ENCODE measurements at regions of chr2 and their contacts with region 1.

Region 1: DNA sequence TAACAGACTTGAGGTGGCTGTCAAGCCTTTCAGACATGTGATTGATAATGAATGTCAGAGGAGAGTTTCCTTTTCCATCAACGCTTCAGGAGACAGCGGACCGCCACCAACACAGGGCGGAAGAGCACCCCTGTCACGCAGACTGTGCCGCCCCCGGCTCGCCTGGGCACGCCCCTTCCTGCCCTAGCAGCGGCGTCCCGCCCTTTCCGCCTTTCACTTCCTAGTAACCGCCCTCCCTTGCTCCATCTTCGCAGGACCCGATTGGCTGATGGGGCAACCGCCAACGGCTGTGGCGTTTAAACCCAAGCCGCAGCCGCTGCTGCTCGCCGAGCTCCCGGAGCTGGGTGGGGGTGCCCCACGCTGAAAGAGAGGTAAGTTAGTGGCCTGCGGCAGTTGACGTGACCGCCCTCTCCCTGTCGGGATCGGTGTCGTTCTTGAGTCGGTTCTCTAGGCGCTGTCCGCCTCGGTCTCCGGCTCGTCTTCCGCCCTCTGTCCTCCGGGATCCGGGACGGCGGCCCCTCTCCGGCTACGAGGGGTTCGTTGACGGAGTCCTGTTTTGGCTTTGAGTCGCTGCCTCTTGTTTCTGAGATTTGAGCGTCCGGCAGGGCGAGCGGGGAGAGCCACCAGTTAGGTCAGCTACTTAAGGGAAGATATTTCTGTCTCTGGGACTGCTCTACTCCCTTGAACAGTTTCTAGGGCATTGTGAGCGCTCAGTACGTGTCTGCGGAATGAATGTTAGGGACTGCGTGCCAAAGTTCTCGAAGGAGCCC is at the start of gene SGO2:
- DNase-seq: peak; percentile 98
- ATAC-seq: peak; percentile 90
- H3K4me3 ChIP-seq: peak within 1 kb of the TSS; percentile 92
- H3K27ac ChIP-seq: peak within 1 kb of the TSS; percentile 57
- H3K4me1 ChIP-seq: peaks cover 46% of the 10 kb centered on the region
- H3K27me3 ChIP-seq: no peaks in the 10 kb centered on the region
- CTCF ChIP-seq: no peak
- total RNA-seq, gene SGO2: 23.5 and 25.6 TPM in 2 replicates

Region 2: DNA sequence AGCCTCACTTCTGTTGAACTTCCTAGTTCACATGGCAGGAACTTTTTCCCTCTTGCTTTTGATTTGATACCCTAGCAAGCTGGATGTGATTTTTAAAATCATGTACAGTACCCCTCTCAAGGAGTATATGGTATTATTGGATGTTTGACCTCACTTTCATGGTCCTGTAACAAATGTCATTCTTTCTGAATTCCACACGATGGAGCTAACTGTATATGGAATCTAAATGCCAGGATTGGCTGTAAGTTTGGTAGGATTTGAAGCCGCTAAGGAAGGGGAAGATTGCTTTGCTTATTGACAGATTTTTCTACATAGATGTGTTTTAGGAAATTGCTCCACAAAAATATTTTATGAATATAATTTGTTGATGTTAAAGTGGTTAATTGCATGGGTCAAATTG is 552.4 kb before region 1 on chr2:
- CTCF ChIA-PET with region 1: no interaction called
- POLR2A ChIA-PET with region 1: interaction called, 3 read pairs
- intact Hi-C with region 1: loop called (anchors 5 kb)
- DNase-seq: peak; percentile 50
- ATAC-seq: peak; percentile 39
- H3K4me3 ChIP-seq: no peak overlapping the region
- H3K27ac ChIP-seq: no peak overlapping the region
- H3K4me1 ChIP-seq: peaks cover 15% of the 10 kb centered on the region
- H3K27me3 ChIP-seq: no peaks in the 10 kb centered on the region
- CTCF ChIP-seq: peak; percentile 82

Region 3: DNA sequence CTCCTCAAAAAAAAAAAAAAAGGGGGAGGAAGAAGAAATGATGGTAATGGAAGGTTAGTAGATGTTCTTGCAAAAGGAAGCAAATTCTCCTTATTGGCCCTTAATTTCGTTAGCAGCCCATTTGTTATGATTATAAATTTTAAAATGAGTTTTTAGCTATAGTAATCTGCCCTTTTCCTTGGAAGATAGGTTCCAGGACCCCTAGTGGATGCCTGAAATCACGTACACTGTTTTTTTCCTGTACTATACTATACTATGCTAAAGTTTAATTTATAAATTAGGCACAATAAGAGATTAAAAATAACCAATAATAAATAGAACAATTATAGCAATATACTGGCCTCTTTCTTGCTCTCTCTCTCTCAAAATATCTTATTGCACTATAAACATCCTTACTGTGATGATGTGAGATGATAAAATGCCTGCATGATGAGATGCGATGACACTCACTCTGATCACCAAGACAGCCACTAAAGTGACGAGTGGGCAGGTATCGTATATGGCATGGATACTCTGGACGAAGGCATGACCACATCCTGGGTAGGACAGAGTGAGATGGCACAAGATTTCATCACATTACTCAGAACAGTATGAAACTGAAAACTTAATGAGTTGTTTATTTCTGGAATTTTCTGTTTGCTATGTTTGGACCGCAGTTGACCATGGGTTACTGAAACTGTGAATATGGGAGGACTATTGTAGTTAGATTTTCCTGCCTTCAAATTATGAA is 103.4 kb before region 1 on chr2:
- CTCF ChIA-PET with region 1: no interaction called
- POLR2A ChIA-PET with region 1: no interaction called
- intact Hi-C with region 1: no loop called
- DNase-seq: peak; percentile 46
- ATAC-seq: peak; percentile 27; the same call in 1 of the 2 replicates
- H3K4me3 ChIP-seq: no peak overlapping the region
- H3K27ac ChIP-seq: peak overlapping the region; percentile 24
- H3K4me1 ChIP-seq: peaks cover 26% of the 10 kb centered on the region
- H3K27me3 ChIP-seq: no peaks in the 10 kb centered on the region
- CTCF ChIP-seq: peak; percentile 37; the same call in 1 of the 2 replicates

Region 4: DNA sequence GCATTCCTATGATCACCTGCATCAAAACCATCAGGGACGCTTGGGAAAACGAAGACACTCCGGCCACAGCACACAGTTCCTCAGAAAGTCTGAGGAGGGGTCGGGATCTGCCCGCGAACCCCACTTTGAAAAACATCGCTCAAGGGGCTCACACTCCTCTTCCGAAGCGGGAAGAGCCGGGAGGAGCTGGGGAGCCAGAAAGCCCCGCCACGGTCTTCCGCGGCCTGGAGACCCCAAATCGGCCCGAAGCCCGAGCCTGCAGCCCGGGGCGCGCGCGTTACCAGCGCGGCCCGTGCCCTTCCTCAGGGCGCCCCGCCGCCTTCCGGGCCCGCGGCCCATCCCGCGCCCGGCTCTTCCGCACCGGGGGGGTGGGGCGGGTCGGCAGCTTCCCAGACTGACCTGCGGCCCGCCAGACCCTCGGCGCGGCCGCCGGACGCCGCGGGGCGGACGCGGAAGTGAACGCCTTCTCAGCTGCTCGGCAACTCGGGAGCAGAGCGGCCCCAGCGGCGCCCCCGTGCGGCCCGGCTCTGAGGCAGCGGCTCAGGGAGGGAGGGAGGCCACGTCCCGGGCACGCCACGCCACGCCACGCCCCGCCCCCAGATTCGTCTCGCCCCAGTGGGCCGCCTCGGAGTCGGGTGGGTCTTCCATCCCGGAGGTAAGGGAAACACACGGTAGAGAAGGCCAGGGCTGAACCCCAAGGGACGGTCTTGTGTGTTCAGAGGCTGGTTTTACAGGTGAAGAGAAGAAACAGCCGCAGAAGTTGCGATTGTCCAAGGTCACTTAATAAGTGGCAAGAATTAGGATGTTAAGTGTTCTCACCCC is 16.2 kb before region 1 on chr2 and contains the start of gene KCTD18:
- CTCF ChIA-PET with region 1: interaction called, 4 read pairs
- POLR2A ChIA-PET with region 1: interaction called, 3 read pairs
- intact Hi-C with region 1: loop called (anchors 1 kb)
- DNase-seq: peak; percentile 89
- ATAC-seq: peak; percentile 92
- H3K4me3 ChIP-seq: peak within 1 kb of the TSS; percentile 92
- H3K27ac ChIP-seq: peak within 1 kb of the TSS; percentile 12; the same call in 1 of the 2 replicates
- H3K4me1 ChIP-seq: peaks cover 24% of the 10 kb centered on the region
- H3K27me3 ChIP-seq: no peaks in the 10 kb centered on the region
- CTCF ChIP-seq: peak; percentile 71
- total RNA-seq, gene KCTD18: 10.4 and 13.0 TPM in 2 replicates

Region 5: GRCh38 chr2:200677721-200678585 is 151.9 kb after region 1 on chr2:
- CTCF ChIA-PET with region 1: no interaction called
- POLR2A ChIA-PET with region 1: no interaction called
- intact Hi-C with region 1: no loop called
- DNase-seq: peak; percentile 63
- ATAC-seq: peak; percentile 78
- H3K4me3 ChIP-seq: no peak overlapping the region
- H3K27ac ChIP-seq: no peak overlapping the region; the same call in 1 of the 2 replicates
- H3K4me1 ChIP-seq: peaks cover 19% of the 10 kb centered on the region
- H3K27me3 ChIP-seq: no peaks in the 10 kb centered on the region
- CTCF ChIP-seq: no peak

Measured in PC-3 (cell line).